Sigmoid colon (tissue), 7 donors: ENCODE measurements at regions of chr15 and their contacts with region 1.

Region 1: GRCh38 chr15:78709263-78709882 is 68.4 kb upstream of the CHRNB4 start:
- DNase-seq: peak; percentile 88
- H3K4me3 ChIP-seq: peak overlapping the region in 1 of 4 donors; percentile 27
- H3K27ac ChIP-seq: no peak overlapping the region
- H3K4me1 ChIP-seq: peaks cover 0 to 13% (median 11%) of the 10 kb centered on the region in 4 donors
- H3K27me3 ChIP-seq: no peaks in the 10 kb centered on the region
- CTCF ChIP-seq: peak; percentile 88 to 94 (median 93)
- EP300 ChIP-seq: no peak
- POLR2A ChIP-seq: no peak

Region 2: GRCh38 chr15:78618490-78618934 is 90.9 kb before region 1 on chr15:
- intact Hi-C with region 1: loop called (anchors 1 kb)
- DNase-seq: peak; percentile 96
- H3K4me3 ChIP-seq: no peak overlapping the region
- H3K27ac ChIP-seq: peak overlapping the region in 3 of 4 donors; percentile 37 to 81 (median 65)
- H3K4me1 ChIP-seq: peaks cover 0 to 33% (median 27%) of the 10 kb centered on the region in 4 donors
- H3K27me3 ChIP-seq: peaks cover 0 to 32% (median 12%) of the 10 kb centered on the region in 3 donors
- CTCF ChIP-seq: peak; percentile 77 to 88 (median 82)
- EP300 ChIP-seq: peak in 2 of 4 donors; percentile 63 to 74
- POLR2A ChIP-seq: no peak

Region 3: GRCh38 chr15:78638658-78639314 is 70.6 kb before region 1 on chr15:
- intact Hi-C with region 1: loop called (anchors 1 kb)
- DNase-seq: no peak
- H3K4me3 ChIP-seq: no peak overlapping the region
- H3K27ac ChIP-seq: no peak overlapping the region
- H3K4me1 ChIP-seq: peaks cover 0 to 22% (median 13%) of the 10 kb centered on the region in 4 donors
- H3K27me3 ChIP-seq: peaks cover 0 to 4% (median 0%) of the 10 kb centered on the region in 3 donors
- CTCF ChIP-seq: peak; percentile 38 to 56 (median 54)
- EP300 ChIP-seq: no peak
- POLR2A ChIP-seq: no peak

Region 4: DNA sequence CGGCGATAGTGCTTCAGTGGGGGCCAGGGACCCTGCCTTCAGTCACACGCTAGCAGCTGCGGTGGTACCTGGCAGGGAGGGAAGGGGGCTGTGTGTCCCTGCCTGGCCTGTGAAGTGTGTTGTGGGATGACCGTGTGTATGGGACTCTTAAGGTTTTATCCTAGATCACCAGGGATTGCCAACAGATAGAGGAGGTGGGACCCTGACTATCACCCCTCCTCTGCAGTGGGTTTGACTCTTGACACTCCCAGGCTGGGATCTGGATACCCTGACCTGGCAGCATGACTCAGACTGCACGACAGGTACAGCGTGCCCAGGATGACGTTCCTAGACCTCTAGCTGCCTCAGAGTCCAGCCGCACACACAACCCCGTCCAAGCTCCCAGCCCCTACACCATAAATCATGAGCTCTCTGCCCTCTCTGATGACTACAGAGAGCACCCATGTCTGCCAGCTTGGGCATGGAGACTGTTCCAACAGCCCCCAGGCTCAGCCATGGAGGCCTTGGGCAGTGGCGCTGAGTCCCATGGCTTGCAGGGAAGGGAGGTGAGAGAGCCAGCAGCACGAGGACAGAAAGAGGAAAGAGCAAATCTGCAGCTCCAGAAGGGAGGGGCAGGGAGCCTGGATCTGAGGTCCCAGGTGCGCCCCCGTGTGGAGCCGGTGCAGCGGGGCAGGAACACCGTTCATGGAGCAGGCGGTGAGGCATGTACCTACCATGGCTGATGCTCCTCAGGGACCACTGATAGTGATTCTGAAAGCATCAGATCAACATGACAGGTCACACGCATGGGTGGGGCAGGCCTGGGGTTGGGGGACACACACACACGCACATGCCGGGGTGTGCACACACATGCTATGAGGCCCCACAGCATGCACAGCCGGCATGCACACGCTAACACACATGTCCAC is 30.9 kb after region 1 on chr15:
- intact Hi-C with region 1: no loop called
- DNase-seq: peak; percentile 63
- H3K4me3 ChIP-seq: no peak overlapping the region
- H3K27ac ChIP-seq: no peak overlapping the region
- H3K4me1 ChIP-seq: peaks cover 0 to 11% (median 0%) of the 10 kb centered on the region in 4 donors
- H3K27me3 ChIP-seq: no peaks in the 10 kb centered on the region
- CTCF ChIP-seq: peak in 1 of 4 experiments; percentile 17
- EP300 ChIP-seq: no peak
- POLR2A ChIP-seq: no peak